Naive thymus-derived CD8-positive, alpha-beta T cell (primary cell): ENCODE measurements at regions of chr10 and their contacts with region 1.

Region 1: DNA sequence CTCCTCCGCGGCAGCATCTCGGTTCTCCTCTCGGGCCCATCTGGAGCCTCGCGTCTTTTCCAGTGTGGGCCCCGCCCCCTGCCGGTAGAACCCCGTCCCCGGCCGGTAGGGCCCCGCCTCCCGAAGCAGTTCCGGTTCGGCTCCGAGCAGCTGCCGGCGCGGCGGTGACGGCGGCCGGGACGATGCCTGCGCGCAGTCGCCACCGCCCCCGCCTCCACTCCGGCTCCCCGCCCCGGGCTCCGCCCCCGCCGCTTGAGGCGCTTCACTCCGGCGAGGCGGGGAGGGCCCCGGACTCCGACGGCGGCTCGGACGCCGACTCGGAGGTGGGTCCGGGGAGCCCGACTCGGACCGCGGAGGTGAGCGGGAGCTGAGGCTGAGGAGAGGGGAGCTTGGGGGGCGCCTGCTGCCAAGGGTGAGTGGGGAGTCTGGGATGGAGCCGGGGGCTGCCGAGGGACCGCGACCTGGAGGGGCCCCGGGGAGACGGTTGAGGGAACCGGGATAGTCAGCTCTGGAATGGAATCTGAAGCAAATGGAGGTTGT is at the start of gene SAMD8:
- DNase-seq: peak; percentile 91 to 97 (median 94)
- ATAC-seq: peak; percentile 76 to 81
- H3K4me3 Mint-ChIP-seq: peak within 1 kb of the TSS; percentile 83 to 97 (median 92)
- H3K27ac Mint-ChIP-seq: peak within 1 kb of the TSS; percentile 91 to 98 (median 96)
- H3K4me1 Mint-ChIP-seq: peaks cover 28 to 63% (median 59%) of the 10 kb centered on the region in 4 donors
- H3K27me3 Mint-ChIP-seq: no peaks in the 10 kb centered on the region
- polyA plus RNA-seq, gene SAMD8: 6.3 to 10.6 (median 6.4) TPM

Region 2: DNA sequence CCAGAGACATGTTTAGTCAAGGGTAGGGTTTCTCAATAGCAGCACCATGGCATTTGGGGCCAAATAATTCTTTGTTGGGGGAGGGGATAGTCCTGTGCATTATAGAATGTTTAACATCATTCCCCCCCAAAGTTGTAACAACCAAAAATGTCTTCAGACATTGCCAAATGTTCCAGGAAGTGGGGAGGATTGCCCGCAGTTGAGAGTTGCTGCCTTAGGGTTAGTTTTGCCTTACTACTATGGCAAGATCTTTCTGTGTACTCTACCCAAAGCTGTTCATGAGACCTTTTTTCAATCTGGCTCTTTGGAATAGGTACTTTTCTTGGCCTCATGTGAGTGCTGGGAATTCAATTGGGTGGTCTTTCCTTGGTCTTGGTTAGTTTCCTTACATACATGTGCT is 34.2 kb after region 1 on chr10:
- POLR2A ChIA-PET with region 1: no interaction called
- DNase-seq: peak in 4 of 10 donors; percentile 3 to 21 (median 10)
- ATAC-seq: peak; percentile 65 to 69
- H3K4me3 Mint-ChIP-seq: peak overlapping the region in 8 of 10 donors; percentile 4 to 67 (median 42)
- H3K27ac Mint-ChIP-seq: peak overlapping the region in 8 of 10 donors; percentile 17 to 88 (median 66)
- H3K4me1 Mint-ChIP-seq: peaks cover 21 to 49% (median 47%) of the 10 kb centered on the region in 4 donors
- H3K27me3 Mint-ChIP-seq: no peaks in the 10 kb centered on the region

Region 3: DNA sequence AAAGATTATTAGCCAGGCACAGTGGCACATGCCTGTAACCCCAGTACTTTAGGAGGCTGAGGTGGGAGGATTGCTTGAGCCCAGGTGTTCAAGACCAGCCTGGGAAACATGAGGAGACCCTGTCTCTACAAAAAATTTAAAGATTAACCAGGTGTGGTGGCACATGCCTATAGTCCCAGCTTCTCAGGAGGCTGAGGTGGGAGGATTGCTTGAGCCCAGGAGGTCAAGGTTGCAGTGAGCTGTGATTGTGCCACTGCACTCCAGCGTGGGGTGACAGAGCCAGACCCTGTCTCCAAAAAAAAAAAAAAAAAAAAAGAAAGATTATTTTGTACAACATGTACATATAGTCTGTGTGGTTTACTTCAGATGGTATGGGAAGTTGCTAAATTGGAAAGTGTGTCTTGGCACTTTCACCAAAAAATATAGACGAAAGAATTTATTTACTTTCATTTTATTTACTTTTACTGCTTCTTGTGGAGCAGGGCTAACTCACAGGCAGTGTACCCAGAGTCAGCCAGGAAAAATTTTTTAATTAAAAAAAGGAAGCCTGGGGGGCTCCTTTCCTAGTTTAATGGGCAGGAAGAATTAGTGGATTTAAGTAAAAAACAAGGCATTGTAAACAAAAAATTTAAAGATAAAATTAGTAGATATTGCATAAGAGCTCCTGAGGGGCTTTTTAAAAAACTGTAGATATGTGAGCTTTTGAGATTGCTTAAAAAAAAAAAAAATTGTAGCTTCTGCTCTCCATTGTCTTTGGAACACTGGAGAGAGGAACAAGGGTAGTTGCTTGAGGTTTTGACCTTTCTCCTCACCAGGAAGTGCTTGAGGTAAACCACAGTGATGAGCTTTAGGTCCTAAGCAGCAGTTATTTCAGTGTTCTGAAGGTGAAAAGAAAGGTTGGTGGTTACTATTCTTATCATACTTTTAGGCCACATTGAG is 54.5 kb after region 1 on chr10:
- POLR2A ChIA-PET with region 1: interaction called, 16 read pairs
- DNase-seq: peak in 2 of 10 donors; percentile 37 to 39
- ATAC-seq: peak; percentile 67 to 80
- H3K4me3 Mint-ChIP-seq: peak overlapping the region; percentile 37 to 78 (median 72)
- H3K27ac Mint-ChIP-seq: peak overlapping the region; percentile 70 to 89 (median 79)
- H3K4me1 Mint-ChIP-seq: peaks cover 16 to 63% (median 55%) of the 10 kb centered on the region in 4 donors
- H3K27me3 Mint-ChIP-seq: no peaks in the 10 kb centered on the region